ENCODE measurements at regions of chr17 and their contacts with region 1.

Region 1: DNA sequence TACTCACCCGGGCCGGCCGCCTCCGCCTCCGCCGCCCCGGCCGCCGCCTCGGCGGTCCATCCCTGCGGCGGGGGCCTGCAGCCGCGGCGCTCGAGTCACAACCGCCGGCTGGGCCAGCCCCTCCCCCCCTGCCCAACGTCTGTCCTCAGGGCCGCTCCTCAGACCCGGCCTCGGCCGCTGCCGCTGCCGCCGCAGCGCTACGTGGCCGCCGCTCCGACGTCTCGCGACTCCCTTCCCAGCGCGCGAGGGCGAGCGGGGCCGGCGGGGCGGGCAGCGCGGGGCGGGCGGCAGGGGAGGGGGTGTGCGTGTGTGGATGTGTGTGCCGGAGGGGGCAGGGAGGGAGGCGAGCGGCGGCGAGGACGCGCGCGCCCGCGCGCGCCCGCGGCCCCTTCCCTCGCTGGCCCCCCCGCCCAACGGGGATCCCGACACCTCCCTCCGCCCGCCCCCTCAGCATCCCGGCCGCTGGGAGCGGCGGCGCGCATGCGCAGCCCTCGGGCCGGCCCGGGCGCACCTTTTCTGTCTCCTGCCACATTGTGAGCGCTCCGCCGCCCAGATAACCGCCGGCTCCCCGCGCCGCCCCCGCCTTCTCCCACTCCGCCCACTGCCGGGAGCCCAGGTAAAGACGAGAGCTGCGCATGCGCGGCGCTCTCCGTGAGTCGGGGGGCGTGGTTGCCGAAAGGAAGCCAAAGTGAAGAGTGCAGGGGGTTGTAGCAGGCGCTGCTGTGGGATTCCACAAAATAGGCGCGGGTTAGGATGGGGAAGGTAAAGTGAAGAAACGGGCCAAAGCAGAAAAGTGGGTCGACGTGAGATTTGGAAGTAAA is at the start of gene ZNF652:
- DNase-seq: peak; percentile 86 to 98 (median 97)
- ATAC-seq: peak; percentile 81
- H3K4me3 ChIP-seq: peak within 1 kb of the TSS; percentile 67
- H3K4me3 Mint-ChIP-seq: peak within 1 kb of the TSS; percentile 88 to 99 (median 96)
- H3K27ac ChIP-seq: peak within 1 kb of the TSS; percentile 71
- H3K27ac Mint-ChIP-seq: peak within 1 kb of the TSS; percentile 92 to 97 (median 97)
- H3K4me1 ChIP-seq: peaks cover 26 to 33% of the 10 kb centered on the region in 2 donors
- H3K4me1 Mint-ChIP-seq: peaks cover 48 to 58% (median 53%) of the 10 kb centered on the region in 7 donors
- H3K27me3 ChIP-seq: no peaks in the 10 kb centered on the region
- H3K27me3 Mint-ChIP-seq: no peaks in the 10 kb centered on the region
- total RNA-seq, gene ZNF652: 33.8 to 64.4 (median 49.9) TPM

Region 2: DNA sequence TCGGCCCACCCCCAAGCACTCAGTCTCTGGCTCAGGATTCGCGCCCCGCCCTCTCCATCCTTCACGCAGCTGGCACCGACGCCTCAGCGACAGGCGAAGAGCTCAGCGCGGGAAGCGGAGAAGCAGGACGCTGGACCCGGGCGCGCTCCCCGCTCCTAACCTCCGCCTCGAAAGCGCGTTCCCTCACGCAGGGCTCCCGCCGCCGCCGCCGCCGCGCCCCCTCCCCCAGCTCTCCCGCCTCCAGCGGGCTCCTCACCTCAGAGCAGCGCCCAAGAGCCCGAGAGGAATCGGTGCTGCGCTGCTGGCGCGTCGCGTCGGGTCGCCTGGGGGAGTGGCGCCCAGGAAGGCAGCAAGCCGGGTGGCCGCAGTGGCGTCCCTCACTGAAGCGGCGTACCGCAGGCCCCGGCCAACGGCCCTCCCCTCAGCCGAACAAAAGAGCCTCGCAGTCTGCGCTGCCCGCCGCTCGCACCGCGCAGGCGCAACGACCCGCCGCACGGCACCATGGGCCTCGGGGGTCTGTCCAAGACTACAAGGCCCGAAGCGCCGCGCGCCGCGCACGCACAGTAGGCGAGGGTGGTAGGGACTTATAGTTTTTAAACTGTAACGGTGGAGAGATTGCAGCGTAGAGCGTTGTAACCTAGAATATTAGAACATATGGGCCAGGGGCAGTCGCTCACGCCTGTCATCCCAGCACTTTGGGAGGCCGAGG is 1260.9 kb before region 1 on chr17 and contains the start of gene CBX1:
- CTCF ChIA-PET with region 1: no interaction called
- POLR2A ChIA-PET with region 1: no interaction called
- intact Hi-C with region 1: loop called in 1 of 2 experiments (anchors 5 kb)
- DNase-seq: peak; percentile 87 to 95 (median 93)
- ATAC-seq: peak; percentile 98
- H3K4me3 ChIP-seq: peak within 1 kb of the TSS; percentile 78
- H3K4me3 Mint-ChIP-seq: peak within 1 kb of the TSS; percentile 83 to 95 (median 91)
- H3K27ac ChIP-seq: peak within 1 kb of the TSS; percentile 68
- H3K27ac Mint-ChIP-seq: peak within 1 kb of the TSS; percentile 78 to 94 (median 89)
- H3K4me1 ChIP-seq: peaks cover 6 to 11% of the 10 kb centered on the region in 2 donors
- H3K4me1 Mint-ChIP-seq: peaks cover 17 to 60% (median 54%) of the 10 kb centered on the region in 7 donors
- H3K27me3 ChIP-seq: no peaks in the 10 kb centered on the region
- H3K27me3 Mint-ChIP-seq: no peaks in the 10 kb centered on the region
- total RNA-seq, gene CBX1: 16.4 to 56.7 (median 33.5) TPM

Region 3: DNA sequence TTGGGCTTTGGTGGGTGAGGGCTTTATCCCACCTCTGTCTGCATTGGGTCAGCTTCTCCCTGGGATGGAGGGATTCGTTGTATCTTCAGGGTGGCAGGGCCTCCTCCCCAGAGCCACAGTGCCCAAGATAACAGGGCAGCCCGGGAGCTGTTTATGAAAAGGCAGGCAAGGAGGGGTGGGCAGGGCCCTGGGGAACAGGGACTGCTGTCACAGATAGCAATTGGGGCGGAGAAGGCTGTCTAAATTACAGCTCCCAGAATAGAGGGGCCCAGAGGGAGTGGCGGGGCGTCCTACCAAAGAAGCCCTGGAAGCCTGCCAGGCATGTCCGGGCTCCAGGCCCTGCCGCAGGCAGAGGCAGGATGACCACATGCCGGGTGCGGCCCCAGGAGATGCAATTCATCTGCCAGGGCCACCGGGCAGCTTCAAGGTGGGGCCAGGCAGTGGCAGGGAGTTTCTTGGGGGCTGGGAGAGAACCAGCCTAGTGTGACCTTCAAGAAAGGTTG is 112.8 kb before region 1 on chr17:
- CTCF ChIA-PET with region 1: no interaction called
- POLR2A ChIA-PET with region 1: no interaction called
- intact Hi-C with region 1: no loop called
- DNase-seq: no peak
- ATAC-seq: no peak
- H3K4me3 ChIP-seq: no peak overlapping the region
- H3K4me3 Mint-ChIP-seq: no peak overlapping the region
- H3K27ac ChIP-seq: no peak overlapping the region
- H3K27ac Mint-ChIP-seq: no peak overlapping the region
- H3K4me1 ChIP-seq: no peaks in the 10 kb centered on the region
- H3K4me1 Mint-ChIP-seq: peaks cover 0 to 4% (median 0%) of the 10 kb centered on the region in 7 donors
- H3K27me3 ChIP-seq: no peaks in the 10 kb centered on the region
- H3K27me3 Mint-ChIP-seq: peaks cover 0 to 15% (median 2%) of the 10 kb centered on the region in 5 donors

Region 4: DNA sequence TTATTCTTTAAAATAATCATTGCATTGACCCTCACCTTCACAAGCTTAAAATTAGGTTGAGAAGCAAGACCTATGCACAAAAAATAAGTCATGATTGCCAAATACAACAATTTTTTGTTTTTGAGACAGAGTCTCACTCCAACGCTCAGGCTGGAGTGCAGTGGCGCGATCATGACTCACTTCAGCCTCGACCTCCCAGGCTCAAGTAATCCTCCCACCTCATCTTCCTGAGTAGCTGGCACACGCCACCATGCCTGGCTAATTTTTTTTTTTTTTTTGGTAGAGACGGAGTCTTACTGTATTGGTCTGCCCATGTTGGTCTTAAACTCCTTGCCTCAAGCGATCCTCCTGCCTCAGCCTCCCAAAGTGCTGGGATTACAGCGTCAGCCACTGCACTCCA is 24.2 kb before region 1 on chr17:
- CTCF ChIA-PET with region 1: interaction called, 7 read pairs
- POLR2A ChIA-PET with region 1: interaction called, 57 read pairs
- intact Hi-C with region 1: loop called (anchors 1 kb)
- DNase-seq: no peak
- ATAC-seq: no peak
- H3K4me3 ChIP-seq: no peak overlapping the region
- H3K4me3 Mint-ChIP-seq: peak overlapping the region in 3 of 10 donors; percentile 7 to 39 (median 29)
- H3K27ac ChIP-seq: no peak overlapping the region
- H3K27ac Mint-ChIP-seq: peak overlapping the region in 3 of 9 donors; percentile 49 to 73 (median 55)
- H3K4me1 ChIP-seq: peaks cover under 1 to 38% of the 10 kb centered on the region in 2 donors
- H3K4me1 Mint-ChIP-seq: peaks cover 35 to 66% (median 55%) of the 10 kb centered on the region in 7 donors
- H3K27me3 ChIP-seq: no peaks in the 10 kb centered on the region
- H3K27me3 Mint-ChIP-seq: peaks cover 0 to 11% (median 0%) of the 10 kb centered on the region in 5 donors

Region 5: DNA sequence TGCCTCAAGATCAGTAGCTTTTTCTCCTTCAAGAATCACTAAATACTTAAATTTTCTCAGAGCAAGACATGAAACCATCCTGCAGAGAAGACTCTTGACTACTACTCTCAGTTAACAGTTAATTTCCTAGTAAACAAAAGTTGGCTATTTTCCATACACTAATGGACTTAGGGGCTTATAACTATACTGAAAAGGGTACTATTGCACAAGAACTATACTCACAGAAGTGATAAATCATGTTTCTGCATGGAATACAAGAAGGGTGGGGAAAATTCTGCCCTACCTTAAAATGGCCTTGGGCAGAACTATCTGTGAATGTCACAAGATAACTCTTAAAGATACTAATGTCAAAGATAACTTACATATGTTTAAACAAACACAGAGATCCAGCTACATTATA is 12.6 kb before region 1 on chr17:
- CTCF ChIA-PET with region 1: interaction called, 5 read pairs
- POLR2A ChIA-PET with region 1: interaction called, 39 read pairs
- intact Hi-C with region 1: no loop called
- DNase-seq: no peak
- ATAC-seq: no peak
- H3K4me3 ChIP-seq: no peak overlapping the region
- H3K4me3 Mint-ChIP-seq: peak overlapping the region in 1 of 10 donors; percentile 13
- H3K27ac ChIP-seq: no peak overlapping the region
- H3K27ac Mint-ChIP-seq: no peak overlapping the region
- H3K4me1 ChIP-seq: peaks cover 7 to 21% of the 10 kb centered on the region in 2 donors
- H3K4me1 Mint-ChIP-seq: peaks cover 21 to 68% (median 51%) of the 10 kb centered on the region in 7 donors
- H3K27me3 ChIP-seq: no peaks in the 10 kb centered on the region
- H3K27me3 Mint-ChIP-seq: peaks cover 0 to 2% (median 0%) of the 10 kb centered on the region in 5 donors

Region 6: GRCh38 chr17:49414622-49415350 is 52.7 kb after region 1 on chr17 and contains the start of gene PHB1:
- CTCF ChIA-PET with region 1: no interaction called
- POLR2A ChIA-PET with region 1: interaction called, 7 read pairs
- intact Hi-C with region 1: loop called (anchors 1 kb)
- DNase-seq: peak; percentile 75 to 98 (median 93)
- ATAC-seq: peak; percentile 99
- H3K4me3 ChIP-seq: peak within 1 kb of the TSS; percentile 77
- H3K4me3 Mint-ChIP-seq: peak within 1 kb of the TSS; percentile 92 to 99 (median 96)
- H3K27ac ChIP-seq: peak within 1 kb of the TSS; percentile 77
- H3K27ac Mint-ChIP-seq: peak within 1 kb of the TSS; percentile 78 to 99 (median 92)
- H3K4me1 ChIP-seq: peaks cover 8% of the 10 kb centered on the region in 2 donors
- H3K4me1 Mint-ChIP-seq: peaks cover 11 to 30% (median 26%) of the 10 kb centered on the region in 7 donors
- H3K27me3 ChIP-seq: no peaks in the 10 kb centered on the region
- H3K27me3 Mint-ChIP-seq: peaks cover 0 to 3% (median 0%) of the 10 kb centered on the region in 5 donors
- total RNA-seq, gene PHB1: 50.0 to 186 (median 54.4) TPM

Measured in naive thymus-derived CD4-positive, alpha-beta T cell (primary cell).